T-cell (primary cell): ENCODE measurements at regions of chr10 and their contacts with region 1.

Region 1: DNA sequence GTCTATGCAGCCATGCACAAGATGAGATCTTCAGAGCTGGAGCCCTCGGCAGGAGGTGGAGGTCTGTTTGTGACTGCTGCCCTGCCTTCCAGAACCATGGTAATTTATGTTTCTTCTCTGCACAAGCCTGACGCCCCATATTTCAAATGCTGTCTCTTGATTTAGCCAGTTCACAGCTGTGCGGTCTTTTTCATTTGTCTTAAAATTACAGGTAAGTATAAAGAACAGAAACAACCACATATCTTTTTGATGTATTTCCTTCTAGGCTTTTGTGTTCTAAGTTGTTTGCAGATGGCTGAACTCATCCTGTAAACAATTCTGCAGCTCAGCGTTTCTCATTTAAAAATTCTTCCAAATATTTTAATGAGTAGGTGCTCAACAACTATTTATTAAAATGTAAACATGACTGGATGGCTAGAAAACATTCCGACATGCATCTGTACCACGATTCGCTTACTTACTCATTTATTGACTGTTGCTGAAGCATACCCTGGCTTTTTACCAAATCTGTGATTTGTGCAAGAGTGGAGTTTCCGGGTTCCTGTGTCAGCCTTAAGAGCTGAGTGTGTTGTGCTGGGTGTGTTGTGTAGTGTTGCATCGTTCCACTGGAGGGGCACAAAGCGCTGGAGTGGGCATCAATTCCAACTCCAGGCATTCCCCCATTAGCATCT is 58.9 kb downstream of the PIP4K2A start:
- DNase-seq: peak in 33 of 35 experiments; percentile 14 to 81 (median 58)
- ATAC-seq: peak; percentile 74 to 88 (median 77)
- H3K4me3 ChIP-seq: peak overlapping the region; percentile 15 to 25
- H3K4me3 Mint-ChIP-seq: peak overlapping the region; percentile 59 to 75 (median 69)
- H3K27ac ChIP-seq: peak overlapping the region; percentile 81
- H3K27ac Mint-ChIP-seq: peak overlapping the region; percentile 93 to 98
- H3K4me1 ChIP-seq: peaks cover 88 to 90% of the 10 kb centered on the region in 2 experiments
- H3K4me1 Mint-ChIP-seq: peaks cover 96 to 98% (median 97%) of the 10 kb centered on the region in 3 donors
- H3K27me3 ChIP-seq: no peaks in the 10 kb centered on the region
- H3K27me3 Mint-ChIP-seq: no peaks in the 10 kb centered on the region

Region 2: GRCh38 chr10:22548343-22548742 is 107.1 kb before region 1 on chr10:
- CTCF ChIA-PET with region 1: no interaction called
- POLR2A ChIA-PET with region 1: no interaction called
- DNase-seq: no peak
- ATAC-seq: no peak
- H3K4me3 ChIP-seq: no peak overlapping the region
- H3K4me3 Mint-ChIP-seq: no peak overlapping the region
- H3K27ac ChIP-seq: no peak overlapping the region
- H3K27ac Mint-ChIP-seq: no peak overlapping the region
- H3K4me1 ChIP-seq: peaks cover 2 to 19% of the 10 kb centered on the region in 2 experiments
- H3K4me1 Mint-ChIP-seq: peaks cover 24 to 31% (median 30%) of the 10 kb centered on the region in 3 donors
- H3K27me3 ChIP-seq: no peaks in the 10 kb centered on the region
- H3K27me3 Mint-ChIP-seq: no peaks in the 10 kb centered on the region

Region 3: DNA sequence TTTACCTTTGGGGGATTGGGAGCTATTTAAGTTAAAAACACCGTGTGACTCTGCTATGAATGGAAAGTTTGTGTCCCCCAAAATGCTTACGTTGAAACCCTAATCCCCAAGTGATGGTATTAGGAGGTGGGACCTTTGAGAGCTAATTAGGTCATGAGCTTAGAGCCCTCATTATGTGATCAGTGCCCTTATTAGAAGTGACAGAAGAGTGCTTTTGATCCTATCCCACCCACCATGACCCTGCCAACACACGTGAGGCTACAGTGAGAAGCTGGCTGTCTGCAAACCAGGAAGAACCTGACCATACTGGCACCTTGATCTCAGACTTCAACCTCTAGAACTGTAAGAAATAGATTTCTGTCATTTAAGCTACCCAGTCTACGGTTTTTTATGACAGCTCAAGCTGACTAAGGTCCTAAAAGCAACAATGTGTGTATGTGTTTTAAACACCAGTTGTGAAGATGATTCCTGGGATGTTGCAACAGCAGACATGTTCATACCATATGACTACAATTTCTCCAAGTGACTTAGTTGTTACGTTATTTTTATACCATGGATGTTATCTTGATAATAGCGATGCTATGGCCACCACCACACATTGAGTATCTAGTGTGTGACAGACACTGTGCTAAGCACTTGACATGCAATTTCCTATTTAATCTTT is 65.5 kb before region 1 on chr10:
- CTCF ChIA-PET with region 1: interaction called in 1 of 2 experiments, 21 read pairs
- POLR2A ChIA-PET with region 1: no interaction called
- DNase-seq: no peak
- ATAC-seq: no peak
- H3K4me3 ChIP-seq: no peak overlapping the region
- H3K4me3 Mint-ChIP-seq: no peak overlapping the region
- H3K27ac ChIP-seq: no peak overlapping the region
- H3K27ac Mint-ChIP-seq: peak overlapping the region; percentile 49 to 80
- H3K4me1 ChIP-seq: peaks cover 0 to 34% of the 10 kb centered on the region in 2 experiments
- H3K4me1 Mint-ChIP-seq: peaks cover 51 to 79% (median 72%) of the 10 kb centered on the region in 3 donors
- H3K27me3 ChIP-seq: no peaks in the 10 kb centered on the region
- H3K27me3 Mint-ChIP-seq: no peaks in the 10 kb centered on the region

Region 4: GRCh38 chr10:22615819-22616499 is 39.5 kb before region 1 on chr10:
- CTCF ChIA-PET with region 1: interaction called, 6 to 15 read pairs
- POLR2A ChIA-PET with region 1: interaction called, 3 to 4 read pairs
- DNase-seq: peak in 13 of 35 experiments; percentile 10 to 70 (median 33)
- ATAC-seq: peak in 3 of 4 experiments; percentile 13 to 24 (median 17)
- H3K4me3 ChIP-seq: no peak overlapping the region
- H3K4me3 Mint-ChIP-seq: peak overlapping the region; percentile 57 to 64 (median 61)
- H3K27ac ChIP-seq: peak overlapping the region; percentile 93
- H3K27ac Mint-ChIP-seq: peak overlapping the region; percentile 96 to 99
- H3K4me1 ChIP-seq: peaks cover 72 to 75% of the 10 kb centered on the region in 2 experiments
- H3K4me1 Mint-ChIP-seq: peaks cover 87 to 97% (median 96%) of the 10 kb centered on the region in 3 donors
- H3K27me3 ChIP-seq: no peaks in the 10 kb centered on the region
- H3K27me3 Mint-ChIP-seq: no peaks in the 10 kb centered on the region

Region 5: DNA sequence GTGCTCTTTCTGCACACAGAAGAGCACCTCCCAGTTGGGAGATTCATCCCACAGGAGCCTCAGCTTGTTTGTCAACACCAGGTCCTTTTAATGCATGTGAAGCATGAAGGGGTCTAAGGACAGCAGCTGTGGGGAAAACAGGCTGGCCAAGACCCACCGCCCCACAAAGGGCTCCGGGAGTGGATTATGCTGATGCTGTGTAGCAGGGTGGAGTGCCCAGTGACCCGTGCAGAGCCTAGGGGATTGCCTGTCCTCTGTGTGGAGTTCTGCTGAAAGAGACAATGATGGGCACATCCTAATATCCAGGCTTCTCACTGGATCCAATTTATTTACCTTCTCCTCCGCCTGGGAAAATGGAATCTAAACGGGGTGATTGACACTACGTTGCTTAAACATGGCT is 15.1 kb before region 1 on chr10:
- CTCF ChIA-PET with region 1: interaction called, 3 to 5 read pairs
- POLR2A ChIA-PET with region 1: interaction called in 1 of 2 experiments, 15 read pairs
- DNase-seq: no peak
- ATAC-seq: no peak
- H3K4me3 ChIP-seq: no peak overlapping the region
- H3K4me3 Mint-ChIP-seq: no peak overlapping the region
- H3K27ac ChIP-seq: no peak overlapping the region
- H3K27ac Mint-ChIP-seq: peak overlapping the region; percentile 28 to 75
- H3K4me1 ChIP-seq: peaks cover 37 to 74% of the 10 kb centered on the region in 2 experiments
- H3K4me1 Mint-ChIP-seq: peaks cover 83 to 92% (median 89%) of the 10 kb centered on the region in 3 donors
- H3K27me3 ChIP-seq: no peaks in the 10 kb centered on the region
- H3K27me3 Mint-ChIP-seq: no peaks in the 10 kb centered on the region

Region 6: GRCh38 chr10:22666287-22667092 is 11.0 kb after region 1 on chr10:
- CTCF ChIA-PET with region 1: interaction called, 8 to 12 read pairs
- POLR2A ChIA-PET with region 1: interaction called, 4 read pairs
- DNase-seq: peak in 34 of 35 experiments; percentile 43 to 89 (median 66)
- ATAC-seq: peak; percentile 95 to 97 (median 96)
- H3K4me3 ChIP-seq: peak overlapping the region; percentile 26 to 57
- H3K4me3 Mint-ChIP-seq: peak overlapping the region; percentile 79 to 82 (median 81)
- H3K27ac ChIP-seq: peak overlapping the region; percentile 71
- H3K27ac Mint-ChIP-seq: peak overlapping the region; percentile 93 to 95
- H3K4me1 ChIP-seq: peaks cover 36 to 84% of the 10 kb centered on the region in 2 experiments
- H3K4me1 Mint-ChIP-seq: peaks cover 89 to 90% (median 90%) of the 10 kb centered on the region in 3 donors
- H3K27me3 ChIP-seq: no peaks in the 10 kb centered on the region
- H3K27me3 Mint-ChIP-seq: no peaks in the 10 kb centered on the region

Region 7: DNA sequence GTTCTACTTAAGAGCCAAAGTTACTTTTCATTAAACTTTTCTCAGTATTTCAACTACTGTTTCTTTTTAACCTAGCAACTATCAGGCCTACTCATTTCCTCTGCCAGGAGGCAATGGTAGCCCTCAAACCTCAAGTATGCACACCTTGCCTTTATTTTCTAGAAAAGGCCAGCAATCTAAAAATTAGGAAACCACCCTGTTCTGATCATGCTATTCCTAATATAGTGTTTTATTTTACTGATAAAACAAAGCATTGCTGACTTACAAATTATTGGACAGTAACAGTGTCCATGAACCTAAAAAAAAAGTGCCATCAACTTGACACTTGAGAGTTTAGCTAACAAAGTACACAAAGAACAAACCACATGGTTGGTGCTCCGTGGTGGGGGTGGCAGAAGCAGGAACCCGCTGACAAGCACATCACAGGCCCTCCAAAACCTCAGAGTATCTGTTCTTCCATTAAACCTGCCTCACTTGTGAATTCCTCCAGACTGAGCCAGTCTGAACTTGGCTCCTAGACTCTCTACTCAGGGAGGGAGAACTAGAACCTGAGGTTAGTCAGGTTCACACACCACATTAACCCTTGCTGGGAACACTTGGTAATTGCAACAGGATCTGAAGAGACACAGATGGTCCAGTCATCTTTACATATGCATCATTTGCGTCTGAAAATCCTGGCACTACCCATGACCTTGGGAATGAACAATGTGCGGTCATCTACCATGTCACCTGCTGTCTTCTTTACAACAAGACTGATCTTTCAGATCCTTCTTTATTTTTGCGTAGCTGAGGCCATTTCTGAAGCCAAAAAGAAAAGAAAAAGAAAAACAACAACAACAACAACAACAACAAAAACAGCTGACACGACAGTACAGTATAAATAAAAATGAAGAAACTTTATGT is 27.0 kb after region 1 on chr10:
- CTCF ChIA-PET with region 1: interaction called in 1 of 2 experiments, 22 read pairs
- POLR2A ChIA-PET with region 1: interaction called, 3 to 4 read pairs
- DNase-seq: peak in 34 of 35 experiments; percentile 38 to 81 (median 58)
- ATAC-seq: peak; percentile 67 to 75 (median 68)
- H3K4me3 ChIP-seq: peak overlapping the region in 1 of 2 donors; percentile 54
- H3K4me3 Mint-ChIP-seq: peak overlapping the region; percentile 49 to 75 (median 65)
- H3K27ac ChIP-seq: peak overlapping the region; percentile 94
- H3K27ac Mint-ChIP-seq: peak overlapping the region; percentile 92 to 97
- H3K4me1 ChIP-seq: peaks cover 68 to 95% of the 10 kb centered on the region in 2 experiments
- H3K4me1 Mint-ChIP-seq: peaks cover 89 to 92% (median 90%) of the 10 kb centered on the region in 3 donors
- H3K27me3 ChIP-seq: no peaks in the 10 kb centered on the region
- H3K27me3 Mint-ChIP-seq: no peaks in the 10 kb centered on the region

Region 8: DNA sequence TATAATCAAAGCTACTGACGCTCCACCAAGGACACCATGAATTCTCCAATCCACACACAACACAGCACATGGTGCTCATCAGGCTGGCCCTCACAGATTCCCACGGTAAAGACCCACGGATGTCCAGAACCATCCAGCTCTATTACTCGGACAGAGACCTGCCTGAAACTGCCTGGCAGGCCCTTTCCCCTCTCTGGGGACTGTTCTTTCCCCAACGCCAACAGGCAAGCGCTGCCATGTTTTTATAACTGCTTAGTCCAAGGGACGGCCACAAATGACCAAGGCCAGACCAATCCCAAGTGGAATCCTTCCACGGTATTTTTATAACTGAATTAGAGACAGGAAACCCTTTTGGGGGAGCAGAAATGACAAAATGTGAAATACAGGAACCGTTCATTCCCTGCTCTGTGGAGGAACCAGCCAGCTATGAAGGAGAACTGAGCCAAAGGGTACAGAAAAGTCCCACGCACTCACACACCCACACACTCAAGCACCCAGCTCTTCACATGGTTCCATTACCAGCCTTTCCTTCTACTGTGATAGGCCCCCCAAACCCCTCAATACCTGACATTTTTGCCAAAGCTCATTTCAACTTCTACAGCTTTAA is 54.8 kb after region 1 on chr10:
- CTCF ChIA-PET with region 1: interaction called, 4 to 11 read pairs
- POLR2A ChIA-PET with region 1: no interaction called
- DNase-seq: peak in 1 of 35 experiments; percentile 30
- ATAC-seq: no peak
- H3K4me3 ChIP-seq: no peak overlapping the region
- H3K4me3 Mint-ChIP-seq: peak overlapping the region; percentile 52 to 89 (median 80)
- H3K27ac ChIP-seq: peak overlapping the region; percentile 47
- H3K27ac Mint-ChIP-seq: peak overlapping the region; percentile 85 to 93
- H3K4me1 ChIP-seq: peaks cover 39 to 48% of the 10 kb centered on the region in 2 experiments
- H3K4me1 Mint-ChIP-seq: peaks cover 71 to 76% (median 72%) of the 10 kb centered on the region in 3 donors
- H3K27me3 ChIP-seq: no peaks in the 10 kb centered on the region
- H3K27me3 Mint-ChIP-seq: no peaks in the 10 kb centered on the region